ENCODE measurements at regions of chr16 and their contacts with region 1.

Region 1: DNA sequence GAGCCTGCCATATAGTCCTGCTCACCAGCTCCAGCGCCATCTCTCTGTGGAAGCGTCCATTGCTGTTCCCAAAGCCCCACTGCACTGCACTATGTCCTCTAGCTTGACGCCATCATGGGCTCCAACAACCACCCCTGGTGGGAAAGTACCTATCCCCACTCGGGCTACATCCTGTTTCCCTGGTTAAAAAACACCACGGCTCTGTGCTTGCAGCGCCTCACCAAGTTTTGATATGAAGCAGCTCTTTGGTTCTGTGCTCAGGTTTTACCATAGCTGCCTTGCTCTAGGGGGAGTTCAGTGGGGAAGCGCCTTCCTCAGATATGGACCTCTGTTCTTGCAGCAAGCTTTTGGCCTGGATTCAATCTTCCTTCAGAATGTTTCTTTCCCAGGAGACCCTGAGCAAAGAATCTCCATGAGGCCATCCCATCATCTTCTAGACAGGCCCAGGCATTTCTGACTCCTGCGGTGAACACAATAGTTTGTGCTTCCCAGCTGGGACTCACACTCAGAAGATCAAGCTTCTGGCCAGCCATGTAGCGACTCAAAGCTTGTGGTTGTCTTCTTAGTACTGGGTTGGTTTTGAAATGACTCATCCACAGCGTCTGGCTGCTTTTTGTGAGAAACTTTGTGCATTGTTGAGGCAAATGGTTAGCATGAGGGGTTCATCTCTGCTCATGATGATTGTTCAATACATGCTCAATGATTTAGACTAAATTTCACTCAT is 39.5 kb downstream of the DYNLRB2 start:
- DNase-seq: peak; percentile 86
- H3K4me3 Mint-ChIP-seq: peak overlapping the region; percentile 60
- H3K27ac Mint-ChIP-seq: peak overlapping the region; percentile 91
- H3K4me1 Mint-ChIP-seq: peaks cover 66% of the 10 kb centered on the region
- H3K27me3 Mint-ChIP-seq: peaks cover 4% of the 10 kb centered on the region

Region 2: DNA sequence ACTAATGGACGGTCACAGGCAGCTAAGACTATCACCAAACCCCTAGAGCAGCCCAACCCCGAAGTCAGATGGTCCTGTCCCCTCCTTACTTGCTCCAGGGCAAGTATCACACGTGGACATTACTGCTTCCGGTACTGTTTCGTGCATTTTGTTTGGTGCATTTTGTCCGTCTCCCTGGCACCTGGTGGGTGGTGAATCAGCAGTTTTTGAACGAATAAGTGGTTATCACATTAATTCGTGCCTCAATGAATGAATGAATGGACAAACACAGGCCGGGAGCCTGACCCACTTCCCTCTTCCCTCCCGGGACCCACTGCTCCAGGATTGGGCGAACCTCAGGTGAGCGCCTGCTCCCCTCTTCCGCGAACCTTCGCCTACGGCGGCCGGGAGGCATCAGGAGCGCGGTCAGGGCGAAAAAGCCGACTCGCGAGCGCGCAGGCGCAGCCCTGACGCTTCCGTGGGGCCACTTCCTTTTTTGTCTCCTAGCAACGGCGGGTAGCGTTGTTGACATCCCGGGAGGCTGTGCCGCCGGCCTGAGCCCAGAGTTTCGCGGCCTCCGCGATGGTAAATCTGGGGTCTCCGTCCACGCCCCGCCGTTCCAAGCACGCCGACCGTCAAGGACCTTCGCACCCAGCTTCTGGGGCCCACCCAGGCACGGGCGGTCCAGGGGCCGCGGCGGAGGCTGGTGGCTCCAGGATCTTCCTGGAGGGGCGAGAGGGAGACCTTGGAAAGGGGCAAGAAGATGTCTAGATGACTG is 39.6 kb before region 1 on chr16 and contains the start of gene DYNLRB2:
- CTCF ChIA-PET with region 1: interaction called, 13 read pairs
- DNase-seq: peak; percentile 94
- H3K4me3 Mint-ChIP-seq: peak within 1 kb of the TSS; percentile 89
- H3K27ac Mint-ChIP-seq: peak within 1 kb of the TSS; percentile 95
- H3K4me1 Mint-ChIP-seq: peaks cover 25% of the 10 kb centered on the region
- H3K27me3 Mint-ChIP-seq: peaks cover 20% of the 10 kb centered on the region

Region 3: GRCh38 chr16:80591071-80591915 is 11.0 kb after region 1 on chr16:
- CTCF ChIA-PET with region 1: interaction called, 15 read pairs
- DNase-seq: peak; percentile 60
- H3K4me3 Mint-ChIP-seq: peak overlapping the region; percentile 51
- H3K27ac Mint-ChIP-seq: peak overlapping the region; percentile 88
- H3K4me1 Mint-ChIP-seq: peaks cover 28% of the 10 kb centered on the region
- H3K27me3 Mint-ChIP-seq: peaks cover 42% of the 10 kb centered on the region

Region 4: GRCh38 chr16:80656711-80657150 is 76.5 kb after region 1 on chr16:
- CTCF ChIA-PET with region 1: interaction called, 10 read pairs
- DNase-seq: peak; percentile 69
- H3K4me3 Mint-ChIP-seq: peak overlapping the region; percentile 77
- H3K27ac Mint-ChIP-seq: peak overlapping the region; percentile 96
- H3K4me1 Mint-ChIP-seq: peaks cover 38% of the 10 kb centered on the region
- H3K27me3 Mint-ChIP-seq: no peaks in the 10 kb centered on the region

Region 5: GRCh38 chr16:80803341-80804055 is 223.2 kb after region 1 on chr16:
- CTCF ChIA-PET with region 1: interaction called, 12 read pairs
- DNase-seq: peak; percentile 75
- H3K4me3 Mint-ChIP-seq: peak overlapping the region; percentile 96
- H3K27ac Mint-ChIP-seq: peak overlapping the region; percentile 91
- H3K4me1 Mint-ChIP-seq: peaks cover 41% of the 10 kb centered on the region
- H3K27me3 Mint-ChIP-seq: peaks cover 12% of the 10 kb centered on the region